Right ventricle myocardium superior (tissue), 1 donor: ENCODE measurements at regions of chr2 and their contacts with region 1.

Region 1: GRCh38 chr2:164917296-164917903 is 37.9 kb downstream of the SLC38A11 start:
- DNase-seq: peak; percentile 40
- ATAC-seq: peak; percentile 85

Region 2: GRCh38 chr2:164742738-164743317 is 174.6 kb before region 1 on chr2:
- intact Hi-C with region 1: loop called (anchors 2 kb)
- DNase-seq: no peak
- ATAC-seq: no peak

Region 3: GRCh38 chr2:164841719-164842623 is 75.4 kb before region 1 on chr2 and contains the start of gene COBLL1:
- intact Hi-C with region 1: loop called (anchors 2 kb)
- DNase-seq: peak; percentile 82
- ATAC-seq: peak; percentile 87
- total RNA-seq, gene COBLL1: 12.1 TPM

Region 4: GRCh38 chr2:166197446-166197845 is 1280.0 kb after region 1 on chr2:
- intact Hi-C with region 1: no loop called
- DNase-seq: no peak
- ATAC-seq: no peak